ENCODE measurements at regions of chr10 and their contacts with region 1.

Region 1: GRCh38 chr10:931416-932318 is at the start of gene LARP4B:
- DNase-seq: peak; percentile 96
- H3K4me3 Mint-ChIP-seq: peak within 1 kb of the TSS; percentile 87
- H3K27ac Mint-ChIP-seq: peak within 1 kb of the TSS; percentile 92
- H3K4me1 Mint-ChIP-seq: peaks cover 24% of the 10 kb centered on the region
- H3K27me3 Mint-ChIP-seq: no peaks in the 10 kb centered on the region
- CTCF ChIP-seq: no peak
- total RNA-seq, gene LARP4B: 127 and 131 TPM in 2 replicates

Region 2: DNA sequence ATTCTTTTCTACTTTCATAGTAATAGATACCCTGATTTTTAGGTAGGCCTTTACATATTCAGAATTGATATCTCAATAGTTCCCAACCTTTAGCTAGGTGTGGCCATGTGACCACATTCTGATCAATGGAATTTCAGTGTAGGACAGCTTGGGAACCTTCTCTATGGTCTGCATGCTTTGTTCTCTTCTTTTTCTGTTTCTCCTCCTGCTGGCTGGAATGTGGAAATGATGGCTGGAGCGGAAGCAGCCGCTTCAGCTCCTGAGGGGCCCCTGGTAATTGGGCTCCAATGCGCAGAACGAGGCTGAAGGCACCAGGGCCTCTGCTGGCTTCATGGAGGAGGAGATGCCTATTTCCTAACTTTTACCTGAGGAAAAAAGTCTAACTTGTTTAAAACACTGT is 643.9 kb before region 1 on chr10:
- CTCF ChIA-PET with region 1: no interaction called
- POLR2A ChIA-PET with region 1: no interaction called
- intact Hi-C with region 1: no loop called
- DNase-seq: peak; percentile 12
- H3K4me3 Mint-ChIP-seq: no peak overlapping the region
- H3K27ac Mint-ChIP-seq: no peak overlapping the region
- H3K4me1 Mint-ChIP-seq: no peaks in the 10 kb centered on the region
- H3K27me3 Mint-ChIP-seq: peaks cover 19% of the 10 kb centered on the region
- CTCF ChIP-seq: no peak

Region 3: GRCh38 chr10:1036341-1036791 is 104.7 kb after region 1 on chr10:
- CTCF ChIA-PET with region 1: interaction called, 4 read pairs
- POLR2A ChIA-PET with region 1: interaction called, 24 read pairs
- intact Hi-C with region 1: no loop called
- DNase-seq: peak; percentile 90
- H3K4me3 Mint-ChIP-seq: peak overlapping the region; percentile 28
- H3K27ac Mint-ChIP-seq: peak overlapping the region; percentile 89
- H3K4me1 Mint-ChIP-seq: peaks cover 19% of the 10 kb centered on the region
- H3K27me3 Mint-ChIP-seq: no peaks in the 10 kb centered on the region
- CTCF ChIP-seq: no peak

Region 4: GRCh38 chr10:1056326-1057105 is 124.8 kb after region 1 on chr10 and contains the start of gene WDR37:
- CTCF ChIA-PET with region 1: no interaction called
- POLR2A ChIA-PET with region 1: interaction called, 46 read pairs
- intact Hi-C with region 1: no loop called
- DNase-seq: peak; percentile 87
- H3K4me3 Mint-ChIP-seq: peak within 1 kb of the TSS; percentile 99
- H3K27ac Mint-ChIP-seq: peak within 1 kb of the TSS; percentile 95
- H3K4me1 Mint-ChIP-seq: peaks cover 30% of the 10 kb centered on the region
- H3K27me3 Mint-ChIP-seq: no peaks in the 10 kb centered on the region
- CTCF ChIP-seq: no peak
- total RNA-seq, gene WDR37: 14.2 and 18.2 TPM in 2 replicates

Region 5: DNA sequence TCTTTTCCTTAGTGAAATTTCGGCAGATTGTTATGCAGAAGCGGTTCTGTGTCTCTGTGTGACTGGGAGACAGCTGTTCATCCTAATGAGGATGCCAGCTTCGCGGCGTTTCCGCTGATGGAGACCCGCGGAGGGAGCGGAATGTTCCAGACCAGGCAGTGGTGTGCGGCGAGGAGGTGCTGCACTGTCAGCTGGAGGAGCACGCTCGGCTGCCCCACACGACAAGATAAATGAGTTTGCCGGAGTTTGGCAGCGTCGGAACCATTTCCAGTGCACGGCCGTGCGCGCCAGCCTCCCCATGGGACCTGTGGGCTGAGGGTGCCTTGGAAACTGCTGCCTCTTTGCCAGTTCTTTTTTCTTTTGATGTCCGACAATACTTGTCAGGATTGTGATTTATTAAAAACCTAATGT is 189.1 kb after region 1 on chr10:
- CTCF ChIA-PET with region 1: no interaction called
- POLR2A ChIA-PET with region 1: no interaction called
- intact Hi-C with region 1: no loop called
- DNase-seq: no peak
- H3K4me3 Mint-ChIP-seq: no peak overlapping the region
- H3K27ac Mint-ChIP-seq: no peak overlapping the region
- H3K4me1 Mint-ChIP-seq: no peaks in the 10 kb centered on the region
- H3K27me3 Mint-ChIP-seq: no peaks in the 10 kb centered on the region
- CTCF ChIP-seq: no peak